ENCODE measurements at regions of chr10 and their contacts with region 1.

Region 1: GRCh38 chr10:50624866-50625692 is 1.3 kb upstream of the SGMS1 start:
- DNase-seq: peak; percentile 65 to 70
- H3K4me3 ChIP-seq: peak overlapping the region; percentile 67
- H3K27ac ChIP-seq: peak overlapping the region; percentile 89
- H3K4me1 ChIP-seq: peaks cover 29% of the 10 kb centered on the region
- H3K27me3 ChIP-seq: no peaks in the 10 kb centered on the region
- CTCF ChIP-seq: peak; percentile 65

Region 2: DNA sequence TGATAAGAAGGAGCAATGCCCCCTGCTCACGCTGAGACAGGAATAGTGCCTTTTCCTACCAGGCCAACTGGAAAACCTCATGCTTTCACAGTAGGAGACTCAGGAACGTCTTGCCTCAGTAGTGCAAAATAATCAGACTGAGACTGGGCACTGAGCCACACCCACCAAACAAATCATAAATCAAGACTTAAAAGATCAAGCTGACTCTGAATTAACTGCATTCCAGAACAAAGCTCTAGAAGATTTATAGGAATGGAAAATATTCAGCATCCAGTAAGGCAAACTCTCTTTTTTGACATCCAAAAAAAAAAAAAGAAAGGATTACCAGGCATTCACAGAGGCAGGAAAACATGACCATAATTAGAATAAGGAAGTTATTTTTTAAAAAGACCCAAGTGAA is 1045.5 kb before region 1 on chr10:
- CTCF ChIA-PET with region 1: interaction called, 10 read pairs
- POLR2A ChIA-PET with region 1: no interaction called
- intact Hi-C with region 1: no loop called
- DNase-seq: no peak
- H3K4me3 ChIP-seq: no peak overlapping the region
- H3K27ac ChIP-seq: no peak overlapping the region
- H3K4me1 ChIP-seq: 0 out of 2 replicates have a peak, but pooled peaks cover under 1% of the 10 kb centered on the region
- H3K27me3 ChIP-seq: no peaks in the 10 kb centered on the region
- CTCF ChIP-seq: no peak

Region 3: GRCh38 chr10:50375051-50375452 is 250.0 kb before region 1 on chr10:
- CTCF ChIA-PET with region 1: no interaction called
- POLR2A ChIA-PET with region 1: interaction called, 3 read pairs
- intact Hi-C with region 1: loop called (anchors 5 kb)
- DNase-seq: peak; percentile 51 to 98
- H3K4me3 ChIP-seq: no peak overlapping the region
- H3K27ac ChIP-seq: peak overlapping the region; percentile 85
- H3K4me1 ChIP-seq: peaks cover 37% of the 10 kb centered on the region
- H3K27me3 ChIP-seq: no peaks in the 10 kb centered on the region
- CTCF ChIP-seq: no peak

Region 4: DNA sequence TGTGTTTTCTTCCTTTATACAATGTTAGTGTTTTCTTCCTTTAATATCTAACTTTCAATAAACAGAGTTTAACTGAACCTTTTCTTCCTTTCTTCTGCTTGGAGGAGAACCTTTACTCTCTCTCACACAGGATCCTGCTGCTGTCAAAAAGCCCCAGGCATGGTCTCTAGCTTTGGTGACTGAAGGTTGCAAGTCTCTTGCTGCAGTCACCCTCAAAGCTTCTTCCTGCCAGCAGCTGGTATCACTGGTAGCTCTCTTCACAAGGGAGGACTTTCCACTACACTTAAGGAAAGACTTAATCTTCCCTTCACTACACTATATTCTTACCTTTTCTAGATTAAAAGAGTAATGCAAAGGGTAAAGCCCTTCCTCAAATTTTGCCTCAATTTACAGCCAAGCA is 154.7 kb before region 1 on chr10:
- CTCF ChIA-PET with region 1: no interaction called
- POLR2A ChIA-PET with region 1: interaction called, 3 read pairs
- intact Hi-C with region 1: loop called (anchors 1 kb)
- DNase-seq: peak in 1 of 2 experiments; percentile 66
- H3K4me3 ChIP-seq: peak overlapping the region; percentile 12; the same call in 1 of the 2 replicates
- H3K27ac ChIP-seq: peak overlapping the region; percentile 95
- H3K4me1 ChIP-seq: peaks cover 53% of the 10 kb centered on the region
- H3K27me3 ChIP-seq: no peaks in the 10 kb centered on the region
- CTCF ChIP-seq: no peak

Region 5: GRCh38 chr10:50561816-50562215 is 63.3 kb before region 1 on chr10:
- CTCF ChIA-PET with region 1: no interaction called
- POLR2A ChIA-PET with region 1: no interaction called
- intact Hi-C with region 1: loop called (anchors 1 kb)
- DNase-seq: peak in 1 of 2 experiments; percentile 55
- H3K4me3 ChIP-seq: no peak overlapping the region
- H3K27ac ChIP-seq: no peak overlapping the region
- H3K4me1 ChIP-seq: peaks cover 15% of the 10 kb centered on the region
- H3K27me3 ChIP-seq: no peaks in the 10 kb centered on the region
- CTCF ChIP-seq: peak; percentile 84

Region 6: GRCh38 chr10:50605269-50606263 is 19.5 kb before region 1 on chr10:
- CTCF ChIA-PET with region 1: no interaction called
- POLR2A ChIA-PET with region 1: no interaction called
- intact Hi-C with region 1: loop called (anchors 2 kb)
- DNase-seq: peak; percentile 60 to 92
- H3K4me3 ChIP-seq: no peak overlapping the region; the same call in 1 of the 2 replicates
- H3K27ac ChIP-seq: peak overlapping the region; percentile 53
- H3K4me1 ChIP-seq: peaks cover 45% of the 10 kb centered on the region
- H3K27me3 ChIP-seq: no peaks in the 10 kb centered on the region
- CTCF ChIP-seq: no peak

Region 7: DNA sequence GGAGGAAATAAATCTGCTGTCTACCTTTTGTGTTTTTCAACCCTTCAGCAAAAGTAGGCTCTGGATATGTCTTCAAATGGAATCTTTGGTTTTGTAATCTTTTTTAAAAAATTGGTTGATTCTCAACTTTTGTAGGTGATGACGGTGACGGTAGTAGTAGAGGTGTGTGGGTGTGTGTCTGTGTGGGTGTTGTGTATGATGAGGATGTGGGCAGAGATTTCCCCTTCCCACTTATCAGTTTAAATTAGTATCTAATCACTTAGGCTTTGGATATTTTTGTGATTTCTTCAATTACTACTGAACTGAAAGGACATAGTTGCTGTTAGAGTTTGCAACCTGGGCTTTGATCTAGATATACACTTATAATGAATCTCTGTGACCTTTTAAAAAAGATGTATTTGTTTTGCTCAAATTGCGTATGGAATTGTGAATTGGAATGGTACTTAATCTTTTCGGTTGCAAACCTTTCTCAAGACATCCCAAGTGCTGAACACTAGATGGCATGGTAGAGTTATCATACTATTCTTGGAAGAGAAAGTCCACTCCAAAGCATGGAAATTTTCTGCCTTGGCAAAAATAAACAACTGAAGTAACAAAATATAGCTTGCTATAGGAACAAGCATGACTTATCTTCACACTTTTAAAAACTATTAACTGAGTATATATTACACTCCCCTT is 312.3 kb after region 1 on chr10:
- CTCF ChIA-PET with region 1: no interaction called
- POLR2A ChIA-PET with region 1: no interaction called
- intact Hi-C with region 1: no loop called
- DNase-seq: no peak
- H3K4me3 ChIP-seq: no peak overlapping the region
- H3K27ac ChIP-seq: no peak overlapping the region
- H3K4me1 ChIP-seq: no peaks in the 10 kb centered on the region
- H3K27me3 ChIP-seq: no peaks in the 10 kb centered on the region
- CTCF ChIP-seq: peak; percentile 62